Endothelial cell of umbilical vein (primary cell): ENCODE measurements at regions of chr22 and their contacts with region 1.

Region 1: DNA sequence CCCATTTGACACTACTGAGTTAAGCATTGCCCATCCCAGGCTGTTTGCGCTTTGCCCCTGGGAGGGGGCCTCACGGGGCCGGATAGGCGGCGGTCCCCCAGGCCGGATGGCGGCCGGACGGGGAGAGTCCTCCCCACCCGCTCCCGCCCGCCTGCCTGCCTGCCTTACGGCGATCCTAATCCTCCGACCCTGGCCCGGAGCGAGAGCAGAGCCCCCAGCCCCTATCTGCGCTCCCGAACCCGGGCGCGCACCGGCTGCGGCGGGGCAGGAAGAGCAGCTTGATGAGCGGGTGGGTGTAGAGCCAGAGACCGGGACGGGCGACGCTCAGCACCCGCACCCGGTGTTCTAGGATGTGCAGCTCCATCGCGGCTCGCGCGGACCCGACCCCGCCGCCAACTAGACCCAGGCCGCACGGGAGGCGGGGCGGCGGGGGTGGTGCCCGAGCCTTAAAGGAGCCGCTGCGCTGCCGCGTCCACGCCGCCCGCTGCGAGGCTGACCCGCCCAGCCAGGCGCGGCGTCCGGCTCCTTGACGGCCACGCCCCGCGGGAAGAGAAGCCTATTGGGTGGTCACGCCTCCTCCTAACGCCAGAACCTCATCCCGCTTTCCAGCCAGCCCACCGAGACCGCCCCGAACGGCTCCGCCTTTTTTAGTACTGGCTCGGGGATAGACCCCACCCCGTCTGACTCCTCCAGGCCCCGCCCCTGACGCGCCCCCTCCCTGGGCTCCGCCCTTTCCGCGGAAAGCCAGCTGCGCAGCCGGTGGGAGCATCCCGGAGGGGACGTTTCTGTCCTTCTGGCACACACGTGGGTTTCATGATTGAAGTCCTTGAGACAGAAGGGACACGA is at the start of gene CASTOR1:
- DNase-seq: peak; percentile 99
- H3K4me3 ChIP-seq: peak within 1 kb of the TSS; percentile 54 to 84 (median 64)
- H3K27ac ChIP-seq: peak within 1 kb of the TSS; percentile 51
- H3K4me1 ChIP-seq: peaks cover 28% of the 10 kb centered on the region
- H3K27me3 ChIP-seq: no peaks in the 10 kb centered on the region
- CTCF ChIP-seq: no peak
- POLR2A ChIP-seq: peak; percentile 60
- total RNA-seq, gene CASTOR1: 7.2 and 8.1 TPM in 2 replicates

Region 2: GRCh38 chr22:29860006-29860766 is 429.2 kb before region 1 on chr22:
- CTCF ChIA-PET with region 1: no interaction called
- POLR2A ChIA-PET with region 1: no interaction called
- dilution Hi-C with region 1: no loop called
- intact Hi-C with region 1: no loop called
- DNase-seq: no peak
- H3K4me3 ChIP-seq: no peak overlapping the region
- H3K27ac ChIP-seq: no peak overlapping the region
- H3K4me1 ChIP-seq: no peaks in the 10 kb centered on the region
- H3K27me3 ChIP-seq: peaks cover 0 to 3% of the 10 kb centered on the region in 2 experiments
- CTCF ChIP-seq: no peak
- POLR2A ChIP-seq: no peak

Region 3: GRCh38 chr22:30104501-30105156 is 184.7 kb before region 1 on chr22:
- CTCF ChIA-PET with region 1: interaction called, 28 read pairs
- POLR2A ChIA-PET with region 1: no interaction called
- dilution Hi-C with region 1: no loop called
- intact Hi-C with region 1: no loop called
- DNase-seq: no peak
- H3K4me3 ChIP-seq: no peak overlapping the region
- H3K27ac ChIP-seq: no peak overlapping the region
- H3K4me1 ChIP-seq: no peaks in the 10 kb centered on the region
- H3K27me3 ChIP-seq: peaks cover 10 to 44% of the 10 kb centered on the region in 2 experiments
- CTCF ChIP-seq: no peak
- POLR2A ChIP-seq: no peak

Region 4: DNA sequence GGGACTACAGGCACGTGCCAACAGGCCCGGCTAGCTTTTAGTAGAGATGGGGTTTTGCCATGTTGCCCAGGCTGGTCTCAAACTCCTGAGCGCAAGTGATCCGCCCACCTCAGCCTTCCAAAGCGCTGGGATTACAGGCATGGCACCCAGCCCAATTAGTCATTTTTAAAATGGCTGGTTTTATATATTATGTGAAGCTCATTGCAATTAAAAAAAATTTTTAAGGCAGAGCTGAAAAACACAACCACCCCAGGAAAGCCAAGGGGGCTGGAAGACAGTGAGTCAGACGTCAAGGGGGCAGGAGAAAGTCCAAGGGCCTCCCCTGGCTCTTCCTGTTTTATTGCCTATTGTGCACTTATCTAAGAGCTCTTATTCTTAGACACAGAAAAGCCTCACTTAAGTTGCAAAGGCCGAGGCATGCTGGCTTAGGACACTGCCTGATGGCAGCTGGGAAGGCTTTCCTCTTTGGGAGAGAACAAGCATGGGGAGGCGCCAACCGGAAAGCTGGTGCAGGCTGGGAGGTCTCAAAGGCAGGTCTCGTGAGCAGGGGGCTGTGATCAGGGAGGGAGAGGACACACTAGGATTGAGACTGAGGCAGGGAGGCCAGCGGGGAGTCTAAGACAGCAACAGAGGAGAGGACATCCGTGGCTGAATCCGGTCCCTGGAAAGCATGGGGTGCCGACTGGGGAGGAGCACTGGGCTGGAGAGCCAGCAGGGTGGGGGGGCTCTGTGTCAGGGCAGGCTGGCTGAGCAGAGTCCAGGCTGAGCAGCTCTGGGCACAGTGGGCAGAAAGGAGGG is 11.6 kb before region 1 on chr22:
- CTCF ChIA-PET with region 1: interaction called, 61 read pairs
- POLR2A ChIA-PET with region 1: interaction called, 6 read pairs
- dilution Hi-C with region 1: no loop called
- intact Hi-C with region 1: loop called (anchors 1 kb)
- DNase-seq: peak; percentile 89
- H3K4me3 ChIP-seq: no peak overlapping the region
- H3K27ac ChIP-seq: peak overlapping the region; percentile 47
- H3K4me1 ChIP-seq: peaks cover 16% of the 10 kb centered on the region
- H3K27me3 ChIP-seq: no peaks in the 10 kb centered on the region
- CTCF ChIP-seq: no peak
- POLR2A ChIP-seq: no peak

Region 5: DNA sequence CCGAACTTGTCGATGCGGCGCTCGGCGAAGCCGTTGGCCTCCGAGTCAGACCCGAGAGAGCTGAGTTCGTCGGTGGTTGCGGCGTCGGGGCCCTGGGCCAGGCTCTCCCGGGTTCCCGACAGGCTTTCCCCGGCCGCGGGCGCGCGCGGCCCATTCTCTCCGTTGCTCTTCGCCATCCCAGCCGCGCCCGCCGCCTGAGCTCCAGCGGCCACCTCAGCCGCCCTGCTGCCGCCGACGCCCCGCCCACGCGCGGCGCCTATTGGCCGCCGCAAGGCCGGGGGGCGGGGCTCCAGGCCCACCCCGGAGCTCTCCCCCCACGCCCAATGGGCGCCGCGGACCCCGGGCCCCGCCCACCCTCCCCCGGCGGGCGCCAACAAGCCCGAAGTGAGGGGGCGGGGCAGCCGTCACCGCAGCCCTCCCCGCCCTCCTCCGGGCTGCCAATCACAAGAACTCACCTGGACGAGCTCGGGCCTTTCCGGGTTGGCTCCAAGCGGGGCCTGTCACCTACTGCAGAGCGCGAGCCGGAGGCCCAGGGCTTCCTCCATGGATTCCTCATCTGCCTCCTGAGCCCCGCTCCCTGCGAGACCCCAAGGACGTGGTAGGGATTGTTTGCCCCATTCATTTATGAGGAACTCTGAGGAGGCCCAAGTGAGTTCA is 37.5 kb after region 1 on chr22 and contains the start of gene TBC1D10A:
- CTCF ChIA-PET with region 1: interaction called, 164 read pairs
- POLR2A ChIA-PET with region 1: interaction called, 7 read pairs
- dilution Hi-C with region 1: no loop called
- intact Hi-C with region 1: loop called (anchors 1 kb)
- DNase-seq: peak; percentile 86
- H3K4me3 ChIP-seq: peak within 1 kb of the TSS; percentile 62 to 67 (median 64)
- H3K27ac ChIP-seq: peak within 1 kb of the TSS; percentile 38
- H3K4me1 ChIP-seq: peaks cover 13% of the 10 kb centered on the region
- H3K27me3 ChIP-seq: no peaks in the 10 kb centered on the region
- CTCF ChIP-seq: no peak
- POLR2A ChIP-seq: peak; percentile 63
- total RNA-seq, gene TBC1D10A: 10.0 and 11.3 TPM in 2 replicates

Region 6: GRCh38 chr22:30386960-30387827 is 97.8 kb after region 1 on chr22 and contains the start of gene RNF215:
- CTCF ChIA-PET with region 1: interaction called, 133 read pairs
- POLR2A ChIA-PET with region 1: interaction called, 6 read pairs
- dilution Hi-C with region 1: no loop called
- intact Hi-C with region 1: loop called (anchors 1 kb)
- DNase-seq: peak; percentile 78
- H3K4me3 ChIP-seq: peak within 1 kb of the TSS; percentile 36 to 70 (median 43)
- H3K27ac ChIP-seq: peak within 1 kb of the TSS; percentile 20
- H3K4me1 ChIP-seq: peaks cover 15% of the 10 kb centered on the region
- H3K27me3 ChIP-seq: no peaks in the 10 kb centered on the region
- CTCF ChIP-seq: peak; percentile 90 to 91
- POLR2A ChIP-seq: no peak
- total RNA-seq, gene RNF215: 24.4 and 26.9 TPM in 2 replicates

Region 7: DNA sequence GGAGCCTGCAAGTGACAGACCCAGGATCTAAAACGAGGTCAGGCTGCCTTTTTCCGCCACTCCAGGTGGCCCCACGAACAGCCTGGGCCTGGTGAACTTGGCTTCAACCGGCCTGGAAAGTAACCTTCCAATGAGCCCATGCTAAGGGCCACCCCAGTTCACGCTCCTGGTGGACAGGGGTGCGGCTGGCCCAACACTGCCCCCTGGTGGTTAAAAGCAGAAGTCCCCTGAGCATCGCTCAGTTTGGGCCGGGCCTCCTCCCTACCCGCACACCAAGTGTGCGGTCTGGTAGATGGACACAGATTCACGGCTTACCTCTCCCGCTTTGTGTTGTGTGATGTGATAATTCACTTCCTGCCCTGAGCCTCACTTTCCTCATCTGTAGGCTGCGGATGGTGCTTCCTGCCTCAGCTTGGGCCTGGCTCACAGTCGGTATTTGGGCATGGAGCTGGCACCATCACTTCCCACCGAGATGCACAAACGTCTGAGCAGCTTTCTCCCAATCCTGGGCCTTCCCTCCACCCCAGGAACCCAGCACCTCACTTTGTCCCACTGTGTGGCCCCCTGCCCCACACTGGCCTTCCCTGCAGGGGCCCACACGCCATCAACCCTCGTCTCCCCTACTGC is 196.1 kb after region 1 on chr22:
- CTCF ChIA-PET with region 1: interaction called, 8 read pairs
- POLR2A ChIA-PET with region 1: no interaction called
- dilution Hi-C with region 1: no loop called
- intact Hi-C with region 1: loop called (anchors 1 kb)
- DNase-seq: peak; percentile 59
- H3K4me3 ChIP-seq: no peak overlapping the region
- H3K27ac ChIP-seq: no peak overlapping the region
- H3K4me1 ChIP-seq: no peaks in the 10 kb centered on the region
- H3K27me3 ChIP-seq: no peaks in the 10 kb centered on the region
- CTCF ChIP-seq: peak; percentile 86 to 93
- POLR2A ChIP-seq: no peak